ENCODE measurements at regions of chr9 and their contacts with region 1.

Region 1: DNA sequence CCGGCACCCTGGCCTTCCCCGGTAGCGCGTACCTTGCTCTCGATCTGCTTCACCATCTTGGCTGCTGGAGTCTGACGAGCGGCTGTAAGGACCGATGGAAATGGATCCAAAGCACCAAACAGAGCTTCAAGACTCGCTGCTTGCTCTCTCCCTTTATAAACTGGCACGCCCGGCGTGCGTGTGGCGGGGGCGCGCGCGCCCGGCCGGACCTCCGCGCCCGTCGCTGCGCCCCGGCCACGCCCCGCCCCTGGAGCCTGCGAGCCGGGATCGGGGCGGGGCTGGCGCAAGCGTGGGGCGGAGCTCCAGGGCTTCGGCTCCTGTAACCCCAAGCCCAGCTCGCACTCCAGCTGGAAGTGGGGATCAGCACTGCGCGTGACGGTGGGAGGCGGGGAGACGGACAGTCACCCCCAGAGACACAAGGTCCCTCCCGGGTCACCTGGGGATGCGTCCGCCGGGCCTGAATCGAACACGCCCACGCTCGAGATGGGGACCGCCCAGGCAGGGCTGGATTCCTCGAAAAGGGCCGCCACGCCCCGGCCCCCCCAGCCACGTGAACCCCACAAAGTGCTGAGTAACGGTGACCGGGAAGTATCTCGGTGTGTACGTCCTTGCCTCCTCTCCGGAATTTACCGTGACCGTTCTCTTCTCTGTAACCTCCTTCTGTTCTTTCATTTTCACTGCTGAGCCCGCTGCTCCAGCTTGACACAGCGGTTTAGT is at the start of gene TXN:
- DNase-seq: peak; percentile 84
- ATAC-seq: peak; percentile 78
- H3K4me3 ChIP-seq: peak within 1 kb of the TSS; percentile 69 to 95 (median 90)
- H3K27ac ChIP-seq: peak within 1 kb of the TSS; percentile 90
- H3K4me1 ChIP-seq: peaks cover 46% of the 10 kb centered on the region
- H3K27me3 ChIP-seq: no peaks in the 10 kb centered on the region; a peak in 1 of 5 replicates
- CTCF ChIP-seq: no peak
- EP300 ChIP-seq: no peak; a peak in 2 of 4 replicates
- POLR2A ChIP-seq: peak; percentile 90 to 98
- RAD21 ChIP-seq: no peak
- total RNA-seq, gene TXN: 470 and 599 TPM in 2 replicates

Region 2: GRCh38 chr9:110183208-110184145 is 73.1 kb before region 1 on chr9:
- CTCF ChIA-PET with region 1: no interaction called
- POLR2A ChIA-PET with region 1: interaction called, 8 read pairs
- in situ Hi-C with region 1: loop called (anchors 5 kb)
- intact Hi-C with region 1: no loop called
- DNase-seq: peak; percentile 78
- ATAC-seq: peak; percentile 67
- H3K4me3 ChIP-seq: no peak overlapping the region
- H3K27ac ChIP-seq: no peak overlapping the region
- H3K4me1 ChIP-seq: peaks cover 75% of the 10 kb centered on the region
- H3K27me3 ChIP-seq: no peaks in the 10 kb centered on the region
- CTCF ChIP-seq: peak; percentile 91
- EP300 ChIP-seq: no peak
- POLR2A ChIP-seq: no peak
- RAD21 ChIP-seq: peak; percentile 93

Region 3: DNA sequence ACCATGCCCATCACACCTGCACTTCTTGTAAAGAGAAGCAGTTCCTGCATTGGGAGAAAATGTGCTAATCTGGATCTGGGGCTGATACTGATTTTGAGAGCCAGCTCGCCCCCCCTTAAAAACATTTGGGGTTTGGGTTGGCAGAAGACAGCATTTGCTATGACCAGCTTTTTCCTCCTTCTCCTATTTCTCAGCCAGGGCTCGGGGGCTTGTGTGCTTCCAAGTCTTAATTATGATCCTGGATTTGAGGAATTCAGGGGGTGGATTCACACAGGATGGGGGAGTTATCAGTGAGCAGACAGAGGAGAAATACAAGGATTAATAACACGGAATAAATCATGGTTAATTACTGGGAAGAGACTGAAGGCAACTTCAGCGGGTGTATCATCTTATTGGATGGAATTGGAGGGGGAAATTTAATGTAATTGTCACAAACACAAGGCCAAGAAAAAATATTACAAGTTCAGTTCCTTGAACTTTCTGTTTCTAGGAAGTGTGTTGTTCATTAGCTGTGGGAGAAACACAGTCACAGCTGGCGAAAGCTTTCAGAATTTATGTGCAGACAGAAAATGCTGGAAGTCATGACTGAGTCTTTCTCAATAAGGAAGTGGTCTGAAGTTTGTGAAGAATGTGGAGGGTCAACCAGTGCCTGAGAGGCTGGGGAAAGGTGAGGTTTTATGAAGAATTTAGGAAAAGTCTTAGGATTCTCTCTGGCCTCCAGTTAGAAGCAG is 63.8 kb before region 1 on chr9:
- CTCF ChIA-PET with region 1: no interaction called
- POLR2A ChIA-PET with region 1: interaction called, 16 read pairs
- in situ Hi-C with region 1: no loop called
- intact Hi-C with region 1: loop called (anchors 1 kb)
- DNase-seq: no peak
- ATAC-seq: no peak
- H3K4me3 ChIP-seq: no peak overlapping the region
- H3K27ac ChIP-seq: peak overlapping the region; percentile 34
- H3K4me1 ChIP-seq: peaks cover 87% of the 10 kb centered on the region
- H3K27me3 ChIP-seq: no peaks in the 10 kb centered on the region
- CTCF ChIP-seq: no peak
- EP300 ChIP-seq: no peak
- POLR2A ChIP-seq: no peak
- RAD21 ChIP-seq: no peak

Region 4: GRCh38 chr9:110228960-110229359 is 27.6 kb before region 1 on chr9:
- CTCF ChIA-PET with region 1: no interaction called
- POLR2A ChIA-PET with region 1: no interaction called
- in situ Hi-C with region 1: no loop called
- intact Hi-C with region 1: no loop called
- DNase-seq: no peak
- ATAC-seq: peak; percentile 80
- H3K4me3 ChIP-seq: no peak overlapping the region
- H3K27ac ChIP-seq: no peak overlapping the region
- H3K4me1 ChIP-seq: no peaks in the 10 kb centered on the region
- H3K27me3 ChIP-seq: no peaks in the 10 kb centered on the region
- CTCF ChIP-seq: peak; percentile 9; the same call in 1 of the 2 replicates
- EP300 ChIP-seq: no peak
- POLR2A ChIP-seq: no peak
- RAD21 ChIP-seq: no peak

Region 5: GRCh38 chr9:110241260-110241857 is 15.2 kb before region 1 on chr9:
- CTCF ChIA-PET with region 1: no interaction called
- POLR2A ChIA-PET with region 1: interaction called, 10 read pairs
- in situ Hi-C with region 1: no loop called
- intact Hi-C with region 1: no loop called
- DNase-seq: no peak
- ATAC-seq: peak; percentile 23
- H3K4me3 ChIP-seq: no peak overlapping the region
- H3K27ac ChIP-seq: no peak overlapping the region
- H3K4me1 ChIP-seq: no peaks in the 10 kb centered on the region
- H3K27me3 ChIP-seq: no peaks in the 10 kb centered on the region
- CTCF ChIP-seq: no peak
- EP300 ChIP-seq: no peak
- POLR2A ChIP-seq: no peak
- RAD21 ChIP-seq: no peak

Region 6: GRCh38 chr9:110283751-110284150 is 27.2 kb after region 1 on chr9:
- CTCF ChIA-PET with region 1: no interaction called
- POLR2A ChIA-PET with region 1: interaction called, 28 read pairs
- in situ Hi-C with region 1: no loop called
- intact Hi-C with region 1: no loop called
- DNase-seq: no peak
- ATAC-seq: peak; percentile 63
- H3K4me3 ChIP-seq: no peak overlapping the region
- H3K27ac ChIP-seq: peak overlapping the region; percentile 2
- H3K4me1 ChIP-seq: peaks cover 54% of the 10 kb centered on the region
- H3K27me3 ChIP-seq: no peaks in the 10 kb centered on the region
- CTCF ChIP-seq: no peak
- EP300 ChIP-seq: 0 out of 4 replicates have a peak, but pooled peaks of 1 of the 2 experiments have one; percentile 12
- POLR2A ChIP-seq: no peak
- RAD21 ChIP-seq: no peak

Region 7: DNA sequence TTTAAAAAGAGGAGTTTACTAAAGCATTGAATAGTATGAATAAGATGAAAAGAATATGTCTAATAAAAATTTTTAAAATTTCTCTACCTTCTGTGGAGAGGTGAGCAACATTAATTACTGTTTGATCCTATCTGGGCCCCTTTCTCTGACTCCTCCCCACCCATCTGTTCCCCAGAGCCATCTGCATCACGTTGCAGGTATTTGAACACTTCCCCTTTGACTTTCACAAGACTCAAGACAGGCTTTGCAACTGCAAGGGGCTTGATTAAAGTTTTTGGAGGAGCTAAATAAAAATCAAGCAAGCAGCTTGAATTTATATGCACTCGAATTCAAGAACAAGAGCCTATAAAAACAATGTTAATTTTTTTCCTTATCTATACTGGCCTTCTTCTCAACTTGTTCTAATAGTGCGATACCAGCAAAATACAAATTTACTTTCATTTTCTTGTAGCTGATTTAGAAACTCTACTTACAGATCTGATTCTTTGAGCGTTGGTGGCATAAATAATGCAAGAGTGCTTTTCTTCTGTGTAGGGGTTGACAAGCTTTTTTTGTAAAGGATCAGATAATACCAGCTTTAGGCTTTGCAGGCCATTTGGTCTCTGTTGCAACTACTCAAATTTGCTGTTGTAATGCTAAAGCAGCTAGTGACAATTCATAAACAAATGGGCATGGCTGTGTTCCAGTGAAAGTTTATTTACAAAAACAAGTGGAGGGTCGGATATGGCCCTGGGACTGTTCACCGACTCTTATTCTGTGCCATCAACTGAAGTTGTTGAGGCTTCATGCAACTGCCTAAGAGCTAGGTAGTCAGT is 59.9 kb after region 1 on chr9:
- CTCF ChIA-PET with region 1: no interaction called
- POLR2A ChIA-PET with region 1: no interaction called
- in situ Hi-C with region 1: no loop called
- intact Hi-C with region 1: no loop called
- DNase-seq: no peak
- ATAC-seq: no peak
- H3K4me3 ChIP-seq: no peak overlapping the region
- H3K27ac ChIP-seq: no peak overlapping the region
- H3K4me1 ChIP-seq: no peaks in the 10 kb centered on the region
- H3K27me3 ChIP-seq: no peaks in the 10 kb centered on the region
- CTCF ChIP-seq: no peak
- EP300 ChIP-seq: no peak
- POLR2A ChIP-seq: no peak
- RAD21 ChIP-seq: no peak